ENCODE measurements at regions of chr1 and their contacts with region 1.

Region 1: DNA sequence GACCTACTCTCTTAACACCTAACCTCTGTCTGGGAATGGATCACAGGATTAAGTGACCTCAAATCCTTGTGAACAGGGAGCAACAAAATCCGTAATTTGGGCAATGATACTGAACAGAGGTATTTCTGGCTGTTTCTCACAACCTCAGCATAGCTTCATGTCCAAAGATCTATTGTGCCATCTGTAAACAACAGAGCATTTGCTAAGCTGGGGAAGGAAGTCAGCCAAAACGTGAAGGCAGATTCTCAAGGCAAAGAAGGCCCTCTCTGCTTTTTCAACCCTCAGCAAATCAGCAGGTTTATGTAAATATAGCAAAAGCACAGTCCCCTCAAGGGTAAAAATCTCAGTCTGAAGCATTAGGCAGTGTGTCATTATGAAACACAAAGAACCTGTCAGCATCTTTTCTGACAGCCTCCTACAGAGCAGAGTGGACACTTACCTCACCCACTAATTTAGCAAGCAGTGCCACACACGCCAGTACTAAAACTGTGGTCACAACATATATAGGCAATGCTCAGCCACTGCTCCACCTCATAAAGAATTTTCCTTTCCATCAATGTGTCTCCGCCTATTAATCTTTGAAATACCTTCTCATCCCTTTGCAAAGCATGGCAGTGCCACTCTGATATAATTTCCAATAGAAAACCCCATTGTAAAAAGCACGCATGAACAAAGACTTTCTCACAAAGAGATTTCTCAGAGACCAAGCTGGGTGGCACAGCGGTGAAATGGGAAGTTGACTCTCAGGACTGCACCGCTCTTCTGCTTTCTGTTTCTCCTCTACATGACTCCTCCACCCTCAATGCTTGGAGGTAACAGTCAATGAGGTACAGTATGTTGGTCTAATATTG is 188.0 kb downstream of the RERE start:
- DNase-seq: no peak
- ATAC-seq: peak; percentile 84
- H3K4me3 Mint-ChIP-seq: peak overlapping the region; percentile 73
- H3K27ac Mint-ChIP-seq: peak overlapping the region; percentile 92
- H3K4me1 Mint-ChIP-seq: peaks cover 94% of the 10 kb centered on the region
- H3K27me3 Mint-ChIP-seq: no peaks in the 10 kb centered on the region
- CTCF ChIP-seq: no peak

Region 2: GRCh38 chr1:8604041-8604945 is 25.2 kb before region 1 on chr1:
- CTCF ChIA-PET with region 1: no interaction called
- POLR2A ChIA-PET with region 1: interaction called, 14 read pairs
- intact Hi-C with region 1: loop called (anchors 1 kb)
- DNase-seq: no peak
- ATAC-seq: peak; percentile 85
- H3K4me3 Mint-ChIP-seq: peak overlapping the region; percentile 82
- H3K27ac Mint-ChIP-seq: peak overlapping the region; percentile 93
- H3K4me1 Mint-ChIP-seq: peaks cover 41% of the 10 kb centered on the region
- H3K27me3 Mint-ChIP-seq: no peaks in the 10 kb centered on the region
- CTCF ChIP-seq: no peak

Region 3: DNA sequence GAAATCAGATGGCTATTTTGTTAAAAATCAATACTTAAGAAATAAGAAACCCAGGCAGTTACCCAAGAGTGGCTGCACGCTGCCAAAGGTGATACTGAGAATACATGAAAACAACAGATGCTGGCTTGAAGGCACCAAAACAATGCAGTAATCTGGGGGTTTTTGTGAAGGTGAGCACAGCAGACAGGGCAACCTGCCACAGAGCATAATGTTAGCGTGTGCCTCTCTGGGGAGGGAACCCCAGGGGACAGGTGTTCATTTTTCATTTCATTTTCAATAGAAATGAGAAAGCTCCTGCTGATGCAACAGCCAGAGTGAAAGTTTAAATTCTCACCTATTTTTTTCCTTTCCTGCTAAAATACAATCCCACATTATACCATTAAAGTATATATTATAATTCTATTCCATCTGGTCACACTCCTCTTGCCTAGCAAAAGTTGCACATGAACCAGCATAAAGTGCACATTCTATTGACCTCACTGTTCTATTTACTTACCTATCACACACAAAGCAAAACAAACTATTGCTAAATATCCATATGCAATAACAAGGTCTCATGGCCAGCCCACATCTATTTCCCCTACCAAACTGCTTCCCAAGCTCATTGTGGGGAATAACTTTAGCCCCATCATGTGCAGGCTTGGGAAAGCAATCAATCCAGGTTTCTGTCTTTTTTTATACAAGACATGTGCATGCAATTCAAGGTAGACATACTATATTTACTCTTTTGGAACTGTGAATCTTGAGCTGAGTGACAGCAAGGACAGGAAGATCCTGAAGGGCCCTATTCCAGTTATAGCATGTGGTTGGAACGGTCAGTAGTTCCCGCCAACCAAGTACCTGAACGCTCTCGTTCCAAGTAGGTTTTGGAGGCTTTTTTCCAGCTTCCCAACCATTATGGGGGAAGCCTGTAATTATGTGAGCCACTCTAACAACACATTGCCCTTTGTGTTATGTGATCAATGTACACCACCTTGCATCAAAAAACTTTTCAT is 14.4 kb after region 1 on chr1:
- CTCF ChIA-PET with region 1: interaction called, 4 read pairs
- POLR2A ChIA-PET with region 1: interaction called, 5 read pairs
- intact Hi-C with region 1: loop called (anchors 2 kb)
- DNase-seq: peak; percentile 49
- ATAC-seq: peak; percentile 98
- H3K4me3 Mint-ChIP-seq: peak overlapping the region; percentile 28
- H3K27ac Mint-ChIP-seq: peak overlapping the region; percentile 85
- H3K4me1 Mint-ChIP-seq: peaks cover 60% of the 10 kb centered on the region
- H3K27me3 Mint-ChIP-seq: no peaks in the 10 kb centered on the region
- CTCF ChIP-seq: no peak

Region 4: DNA sequence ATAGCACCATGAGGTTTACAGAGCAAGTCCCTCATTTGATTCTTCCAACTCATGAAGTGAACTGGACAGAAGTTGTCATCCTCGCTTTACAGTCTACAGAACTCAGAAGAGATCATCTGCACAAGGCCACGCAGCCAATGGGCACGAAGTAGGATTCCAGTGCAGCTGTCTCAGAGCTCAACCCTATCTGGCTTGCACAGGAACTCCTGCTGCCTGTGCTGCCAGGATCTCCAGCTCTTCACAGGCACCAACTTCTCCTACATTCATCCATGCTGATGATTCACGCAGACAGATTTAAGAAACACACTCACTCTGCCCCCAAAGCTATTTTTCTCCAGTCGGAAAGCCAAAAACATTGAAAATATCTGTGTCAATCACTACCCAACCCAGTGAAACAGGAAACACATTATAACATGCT is 31.0 kb after region 1 on chr1:
- CTCF ChIA-PET with region 1: no interaction called
- POLR2A ChIA-PET with region 1: interaction called, 5 read pairs
- intact Hi-C with region 1: loop called (anchors 1 kb)
- DNase-seq: no peak
- ATAC-seq: peak; percentile 38
- H3K4me3 Mint-ChIP-seq: no peak overlapping the region
- H3K27ac Mint-ChIP-seq: no peak overlapping the region
- H3K4me1 Mint-ChIP-seq: peaks cover 27% of the 10 kb centered on the region
- H3K27me3 Mint-ChIP-seq: no peaks in the 10 kb centered on the region
- CTCF ChIP-seq: no peak

Region 5: GRCh38 chr1:9399510-9400424 is 770.3 kb after region 1 on chr1:
- CTCF ChIA-PET with region 1: no interaction called
- POLR2A ChIA-PET with region 1: no interaction called
- intact Hi-C with region 1: no loop called
- DNase-seq: no peak
- ATAC-seq: peak; percentile 49
- H3K4me3 Mint-ChIP-seq: no peak overlapping the region
- H3K27ac Mint-ChIP-seq: no peak overlapping the region
- H3K4me1 Mint-ChIP-seq: peaks cover 13% of the 10 kb centered on the region
- H3K27me3 Mint-ChIP-seq: no peaks in the 10 kb centered on the region
- CTCF ChIP-seq: no peak

Measured in activated B cell treated with CpG ODN at 0.5 μM for 24 hours (primary cell).